ENCODE measurements at regions of chr16 and their contacts with region 1.

Region 1: DNA sequence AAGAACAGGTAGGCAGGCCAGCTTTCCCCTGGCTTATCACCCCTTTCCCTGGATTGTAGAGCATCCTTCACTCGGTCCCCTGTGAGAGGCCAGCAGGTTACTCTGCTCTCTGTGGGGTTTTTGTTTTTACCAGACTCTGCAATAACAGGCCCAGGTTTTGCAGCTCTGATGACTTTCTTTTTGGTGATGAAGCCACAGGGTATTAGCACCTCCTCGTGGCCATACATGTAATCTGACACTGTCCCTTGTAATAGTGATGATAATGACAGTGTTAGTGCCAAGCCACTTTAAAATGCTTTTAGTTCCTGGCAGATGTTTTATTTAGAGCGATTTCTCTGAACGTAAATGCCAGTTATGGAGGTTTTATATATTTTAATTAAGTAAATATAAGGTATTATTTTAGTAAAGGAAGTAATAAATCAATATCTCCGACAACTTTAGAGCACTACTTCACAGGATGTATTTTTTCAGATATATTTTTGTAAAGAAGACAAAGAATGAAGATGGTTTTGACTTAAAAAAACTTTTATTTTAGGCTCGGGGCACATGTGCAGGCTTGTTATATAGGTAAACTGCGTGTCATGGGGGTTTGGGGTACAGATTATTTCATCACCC is 38.0 kb upstream of the CPHXL start:
- DNase-seq: peak; percentile 53
- H3K4me3 ChIP-seq: no peak overlapping the region
- H3K27ac ChIP-seq: no peak overlapping the region
- H3K4me1 ChIP-seq: no peaks in the 10 kb centered on the region
- H3K27me3 ChIP-seq: no peaks in the 10 kb centered on the region
- CTCF ChIP-seq: peak; percentile 83 to 88

Region 2: DNA sequence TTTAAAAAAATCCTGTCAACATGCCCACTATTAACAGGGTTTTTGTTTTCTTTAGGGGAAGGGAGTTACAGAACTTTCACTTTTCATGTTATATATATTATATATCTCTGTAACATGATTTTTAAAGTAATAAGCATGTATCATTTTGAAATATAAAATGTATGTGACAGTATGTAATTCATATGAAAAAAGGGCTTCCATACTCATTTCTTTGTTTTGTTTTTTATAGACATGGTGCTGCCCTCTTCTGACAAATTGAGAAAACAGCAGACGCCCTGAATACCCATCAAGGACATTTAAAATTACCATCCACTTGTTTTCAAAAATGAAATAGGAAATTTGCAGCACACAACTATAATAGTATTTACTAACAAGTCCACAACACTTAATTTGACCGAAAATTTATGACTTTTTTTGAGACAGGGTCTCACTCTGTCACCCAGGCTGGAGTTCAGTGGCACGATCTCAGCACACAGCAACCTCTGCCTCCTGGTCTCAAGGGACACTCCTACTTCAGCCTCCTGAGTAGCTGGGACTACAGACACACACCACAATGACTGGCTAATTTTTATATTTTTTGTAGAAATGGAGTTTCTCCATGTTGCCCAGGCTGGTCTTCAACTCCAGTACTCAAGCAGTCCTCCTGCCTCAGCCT is 361.3 kb before region 1 on chr16:
- CTCF ChIA-PET with region 1: no interaction called
- dilution Hi-C with region 1: no loop called
- in situ Hi-C with region 1: no loop called
- intact Hi-C with region 1: loop called (anchors 5 kb)
- DNase-seq: peak; percentile 14
- H3K4me3 ChIP-seq: no peak overlapping the region
- H3K27ac ChIP-seq: no peak overlapping the region
- H3K4me1 ChIP-seq: peaks cover 2% of the 10 kb centered on the region
- H3K27me3 ChIP-seq: no peaks in the 10 kb centered on the region
- CTCF ChIP-seq: peak; percentile 59 to 62

Region 3: DNA sequence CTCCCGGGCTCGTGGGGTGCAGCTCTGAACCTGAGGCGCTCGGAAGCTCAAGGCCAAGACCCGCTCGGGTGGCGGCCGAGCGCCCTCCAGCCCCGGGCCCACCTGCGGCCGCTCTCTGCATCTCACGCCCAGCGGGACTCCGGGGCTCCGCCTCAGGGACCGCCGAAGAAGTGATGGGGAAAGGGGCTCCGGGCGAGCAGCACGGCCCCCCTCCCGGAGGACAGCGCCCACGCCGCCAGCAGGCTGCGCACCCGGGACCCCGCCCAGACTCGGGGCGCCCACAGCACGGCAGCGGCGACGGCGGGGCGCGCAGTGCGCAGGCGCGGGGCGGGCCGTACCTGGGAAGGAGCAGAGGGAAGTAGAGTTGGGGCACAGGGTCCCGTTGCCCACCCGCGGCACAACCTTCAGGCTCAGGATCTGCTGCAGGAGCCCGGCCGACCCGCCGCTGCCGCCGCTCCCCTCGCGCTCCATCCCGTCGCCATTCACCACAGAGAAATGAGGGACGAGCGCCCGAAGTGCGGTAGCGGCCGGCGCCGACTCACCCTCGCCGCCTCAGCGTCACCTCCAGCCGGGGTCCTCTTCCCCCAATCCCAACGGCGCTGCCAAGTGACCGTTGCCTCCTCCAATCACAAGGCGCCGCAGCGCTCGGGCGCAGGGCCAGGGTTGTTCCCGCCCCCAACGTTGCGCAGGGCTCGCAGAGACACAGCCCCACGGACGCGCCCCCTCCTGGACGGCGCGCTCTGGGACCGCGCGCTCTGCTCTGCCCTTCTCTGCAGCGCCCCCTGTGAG is 299.9 kb before region 1 on chr16 and contains the start of gene TMEM170A:
- CTCF ChIA-PET with region 1: no interaction called
- dilution Hi-C with region 1: no loop called
- in situ Hi-C with region 1: loop called in 1 of 2 experiments (anchors 25 kb)
- intact Hi-C with region 1: no loop called
- DNase-seq: peak; percentile 99
- H3K4me3 ChIP-seq: peak within 1 kb of the TSS; percentile 89 to 93 (median 90)
- H3K27ac ChIP-seq: peak within 1 kb of the TSS; percentile 81
- H3K4me1 ChIP-seq: peaks cover 12% of the 10 kb centered on the region
- H3K27me3 ChIP-seq: no peaks in the 10 kb centered on the region
- CTCF ChIP-seq: peak; percentile 99 to 100
- total RNA-seq, gene TMEM170A: 12.5 to 15.6 TPM

Region 4: GRCh38 chr16:75471723-75472633 is 292.3 kb before region 1 on chr16:
- CTCF ChIA-PET with region 1: no interaction called
- dilution Hi-C with region 1: no loop called
- in situ Hi-C with region 1: loop called in 1 of 2 experiments (anchors 25 kb)
- intact Hi-C with region 1: loop called (anchors 1 kb)
- DNase-seq: peak; percentile 55
- H3K4me3 ChIP-seq: no peak overlapping the region
- H3K27ac ChIP-seq: no peak overlapping the region
- H3K4me1 ChIP-seq: peaks cover 6% of the 10 kb centered on the region
- H3K27me3 ChIP-seq: no peaks in the 10 kb centered on the region
- CTCF ChIP-seq: peak; percentile 78 to 80

Region 5: GRCh38 chr16:75566040-75566810 is 198.0 kb before region 1 on chr16 and contains the start of gene GABARAPL2:
- CTCF ChIA-PET with region 1: no interaction called
- dilution Hi-C with region 1: no loop called
- in situ Hi-C with region 1: no loop called
- intact Hi-C with region 1: loop called (anchors 5 kb)
- DNase-seq: peak; percentile 70
- H3K4me3 ChIP-seq: peak within 1 kb of the TSS; percentile 73 to 87 (median 78)
- H3K27ac ChIP-seq: peak within 1 kb of the TSS; percentile 69
- H3K4me1 ChIP-seq: peaks cover 11% of the 10 kb centered on the region
- H3K27me3 ChIP-seq: no peaks in the 10 kb centered on the region
- CTCF ChIP-seq: no peak
- total RNA-seq, gene GABARAPL2: 41.2 to 63.2 TPM

Region 6: GRCh38 chr16:75622761-75623605 is 141.3 kb before region 1 on chr16 and contains the start of gene ADAT1:
- CTCF ChIA-PET with region 1: no interaction called
- dilution Hi-C with region 1: no loop called
- in situ Hi-C with region 1: no loop called
- intact Hi-C with region 1: loop called (anchors 1 kb)
- DNase-seq: peak; percentile 97
- H3K4me3 ChIP-seq: peak within 1 kb of the TSS; percentile 75 to 92 (median 83)
- H3K27ac ChIP-seq: peak within 1 kb of the TSS; percentile 79
- H3K4me1 ChIP-seq: peaks cover 11% of the 10 kb centered on the region
- H3K27me3 ChIP-seq: no peaks in the 10 kb centered on the region
- CTCF ChIP-seq: no peak
- total RNA-seq, gene ADAT1: 62.0 to 86.5 TPM

Region 7: DNA sequence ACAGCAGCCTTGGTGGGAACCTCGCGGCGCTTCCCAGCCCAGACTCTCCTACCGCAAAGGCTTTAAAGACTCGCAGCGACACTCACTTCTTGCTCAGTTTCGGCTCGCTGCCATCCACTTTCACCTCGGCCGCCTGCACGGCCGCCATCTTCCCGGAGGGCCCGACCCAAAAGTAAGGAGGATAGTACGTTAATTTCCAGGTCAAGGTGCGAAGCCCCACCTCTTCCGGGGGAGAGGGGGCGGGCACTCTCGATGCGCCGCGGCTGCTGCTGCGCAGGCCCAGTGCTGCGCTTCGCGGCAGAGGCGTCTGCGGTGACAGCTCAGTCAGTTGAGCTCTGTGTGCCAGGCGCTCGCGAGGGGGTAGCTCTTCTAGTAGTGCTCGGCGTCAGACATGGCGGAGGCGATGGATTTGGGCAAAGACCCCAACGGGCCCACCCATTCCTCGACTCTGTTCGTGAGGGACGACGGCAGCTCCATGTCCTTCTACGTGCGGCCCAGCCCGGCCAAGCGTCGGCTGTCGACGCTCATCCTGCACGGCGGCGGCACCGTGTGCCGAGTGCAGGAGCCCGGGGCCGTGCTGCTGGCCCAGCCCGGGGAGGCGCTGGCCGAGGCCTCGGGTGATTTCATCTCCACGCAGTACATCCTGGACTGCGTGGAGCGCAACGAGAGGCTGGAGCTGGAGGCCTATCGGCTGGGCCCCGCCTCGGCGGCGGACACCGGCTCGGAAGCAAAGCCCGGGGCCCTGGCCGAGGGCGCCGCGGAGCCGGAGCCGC is 116.6 kb before region 1 on chr16 and contains the starts of genes KARS1 and TERF2IP:
- CTCF ChIA-PET with region 1: interaction called, 5 read pairs
- dilution Hi-C with region 1: no loop called
- in situ Hi-C with region 1: loop called in 1 of 2 experiments (anchors 10 kb)
- intact Hi-C with region 1: loop called (anchors 1 kb)
- DNase-seq: peak; percentile 93
- H3K4me3 ChIP-seq: peak within 1 kb of the TSS; percentile 88 to 95 (median 92)
- H3K27ac ChIP-seq: peak within 1 kb of the TSS; percentile 82
- H3K4me1 ChIP-seq: peaks cover 25% of the 10 kb centered on the region
- H3K27me3 ChIP-seq: no peaks in the 10 kb centered on the region
- CTCF ChIP-seq: no peak
- total RNA-seq, gene KARS1: 114 to 162 TPM
- total RNA-seq, gene TERF2IP: 31.7 to 40.3 TPM